Sigmoid colon (tissue), 7 donors: ENCODE measurements at regions of chr13 and their contacts with region 1.

Region 1: GRCh38 chr13:110108347-110109174 is 198.4 kb downstream of the COL4A1 start:
- DNase-seq: peak; percentile 93
- H3K4me3 ChIP-seq: no peak overlapping the region
- H3K27ac ChIP-seq: peak overlapping the region; percentile 77 to 86 (median 84)
- H3K4me1 ChIP-seq: peaks cover 3 to 49% (median 40%) of the 10 kb centered on the region in 4 donors
- H3K27me3 ChIP-seq: no peaks in the 10 kb centered on the region
- CTCF ChIP-seq: peak; percentile 64 to 84 (median 77)
- EP300 ChIP-seq: no peak
- POLR2A ChIP-seq: no peak

Region 2: GRCh38 chr13:108915634-108916512 is 1192.7 kb before region 1 on chr13:
- intact Hi-C with region 1: loop called (anchors 10 kb)
- DNase-seq: peak; percentile 98
- H3K4me3 ChIP-seq: peak overlapping the region in 3 of 4 donors; percentile 20 to 34 (median 25)
- H3K27ac ChIP-seq: peak overlapping the region; percentile 73 to 87 (median 80)
- H3K4me1 ChIP-seq: peaks cover 0 to 39% (median 25%) of the 10 kb centered on the region in 4 donors
- H3K27me3 ChIP-seq: no peaks in the 10 kb centered on the region
- CTCF ChIP-seq: no peak
- EP300 ChIP-seq: peak in 3 of 4 donors; percentile 77 to 98 (median 82)
- POLR2A ChIP-seq: no peak

Region 3: GRCh38 chr13:109145631-109146030 is 962.9 kb before region 1 on chr13:
- intact Hi-C with region 1: loop called (anchors 5 kb)
- DNase-seq: no peak
- H3K4me3 ChIP-seq: no peak overlapping the region
- H3K27ac ChIP-seq: peak overlapping the region in 2 of 4 donors; percentile 55 to 69
- H3K4me1 ChIP-seq: peaks cover 0 to 28% (median 24%) of the 10 kb centered on the region in 4 donors
- H3K27me3 ChIP-seq: peaks cover 2 to 8% (median 8%) of the 10 kb centered on the region in 3 donors
- CTCF ChIP-seq: peak; percentile 49 to 77 (median 67)
- EP300 ChIP-seq: no peak
- POLR2A ChIP-seq: no peak

Region 4: DNA sequence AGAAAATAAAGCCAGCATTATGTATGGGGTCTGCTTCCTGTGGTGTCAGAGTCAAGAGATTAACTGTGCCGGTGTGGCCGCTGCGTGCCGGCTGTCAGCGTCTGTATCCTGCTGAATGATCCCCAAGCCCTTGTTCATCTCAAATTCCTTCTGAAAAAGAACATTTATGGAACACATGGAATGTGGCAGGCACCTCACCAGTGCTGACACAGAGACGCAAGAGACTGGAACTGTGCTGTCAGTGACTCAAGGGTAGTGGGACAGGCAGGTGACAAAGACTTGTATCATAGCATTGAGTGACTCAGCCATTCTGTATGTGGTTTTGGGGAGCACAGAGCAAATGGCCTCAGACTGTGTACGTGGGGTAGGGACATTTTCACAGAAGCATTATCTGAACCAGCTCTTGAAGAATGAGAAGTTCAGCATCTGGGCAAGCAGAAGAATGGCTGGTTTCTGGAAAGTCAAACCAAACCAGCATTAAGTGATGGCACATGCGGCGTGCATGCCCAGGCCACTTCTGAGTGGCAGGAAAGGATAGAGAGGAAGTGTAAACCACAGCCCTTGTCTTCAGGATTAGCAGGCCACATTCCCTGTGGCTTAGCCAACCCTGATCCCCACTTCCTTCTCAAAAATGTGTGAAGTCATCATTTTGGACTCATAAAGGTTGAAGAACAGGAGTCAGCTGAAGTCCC is 268.2 kb before region 1 on chr13:
- intact Hi-C with region 1: loop called (anchors 5 kb)
- DNase-seq: no peak
- H3K4me3 ChIP-seq: no peak overlapping the region
- H3K27ac ChIP-seq: no peak overlapping the region
- H3K4me1 ChIP-seq: peaks cover 0 to 19% (median 10%) of the 10 kb centered on the region in 4 donors
- H3K27me3 ChIP-seq: no peaks in the 10 kb centered on the region
- CTCF ChIP-seq: no peak
- EP300 ChIP-seq: no peak
- POLR2A ChIP-seq: no peak

Region 5: DNA sequence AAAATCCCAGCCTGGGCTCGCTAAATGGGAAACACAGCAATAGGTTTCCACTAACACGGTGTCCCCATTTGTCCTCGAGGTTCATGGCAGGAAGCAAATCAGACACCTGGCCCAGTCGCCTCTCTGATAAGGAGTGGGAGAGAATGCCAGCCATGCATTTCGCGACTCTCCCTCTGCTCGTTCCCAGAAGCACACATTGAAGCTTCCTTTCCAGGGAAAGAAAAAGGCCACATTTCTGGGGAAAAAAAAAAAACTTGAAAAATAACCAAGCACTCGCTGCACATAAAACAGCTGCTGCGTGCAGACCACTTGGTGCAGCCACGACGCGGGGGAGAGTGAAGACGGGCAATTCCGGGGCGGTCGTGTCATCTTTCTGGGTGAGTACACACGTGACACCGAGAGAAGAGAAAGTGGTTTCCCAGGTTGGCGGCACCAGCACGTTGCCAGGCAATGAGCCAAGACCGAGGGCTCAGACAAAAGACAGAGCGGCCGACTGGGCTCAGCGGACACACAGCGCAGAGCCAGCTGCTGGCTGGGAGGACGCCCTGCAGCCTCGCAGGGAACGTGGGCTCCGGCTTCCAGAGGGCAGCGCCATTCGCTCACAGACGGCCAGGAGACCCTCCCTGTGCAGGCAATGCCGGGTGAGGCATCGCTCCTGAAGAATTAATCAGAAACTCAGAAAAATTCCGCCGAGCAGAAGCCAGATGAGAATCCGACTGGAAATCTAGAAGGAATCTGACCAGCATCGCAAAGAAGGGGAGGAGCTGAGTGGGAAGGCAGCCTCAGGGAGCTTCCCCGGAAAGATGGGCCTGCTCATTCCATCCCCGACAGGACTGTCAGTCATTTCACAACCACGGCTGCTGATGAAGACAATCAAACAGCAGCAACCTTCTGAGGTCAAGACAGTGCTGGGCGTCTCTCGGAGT is 239.0 kb before region 1 on chr13:
- intact Hi-C with region 1: loop called (anchors 2 kb)
- DNase-seq: peak; percentile 93
- H3K4me3 ChIP-seq: peak overlapping the region; percentile 24 to 45 (median 40)
- H3K27ac ChIP-seq: peak overlapping the region; percentile 67 to 73 (median 72)
- H3K4me1 ChIP-seq: peaks cover 0 to 32% (median 21%) of the 10 kb centered on the region in 4 donors
- H3K27me3 ChIP-seq: no peaks in the 10 kb centered on the region
- CTCF ChIP-seq: peak in 2 of 4 experiments; percentile 24 to 40
- EP300 ChIP-seq: peak in 1 of 4 donors; percentile 28
- POLR2A ChIP-seq: no peak

Region 6: DNA sequence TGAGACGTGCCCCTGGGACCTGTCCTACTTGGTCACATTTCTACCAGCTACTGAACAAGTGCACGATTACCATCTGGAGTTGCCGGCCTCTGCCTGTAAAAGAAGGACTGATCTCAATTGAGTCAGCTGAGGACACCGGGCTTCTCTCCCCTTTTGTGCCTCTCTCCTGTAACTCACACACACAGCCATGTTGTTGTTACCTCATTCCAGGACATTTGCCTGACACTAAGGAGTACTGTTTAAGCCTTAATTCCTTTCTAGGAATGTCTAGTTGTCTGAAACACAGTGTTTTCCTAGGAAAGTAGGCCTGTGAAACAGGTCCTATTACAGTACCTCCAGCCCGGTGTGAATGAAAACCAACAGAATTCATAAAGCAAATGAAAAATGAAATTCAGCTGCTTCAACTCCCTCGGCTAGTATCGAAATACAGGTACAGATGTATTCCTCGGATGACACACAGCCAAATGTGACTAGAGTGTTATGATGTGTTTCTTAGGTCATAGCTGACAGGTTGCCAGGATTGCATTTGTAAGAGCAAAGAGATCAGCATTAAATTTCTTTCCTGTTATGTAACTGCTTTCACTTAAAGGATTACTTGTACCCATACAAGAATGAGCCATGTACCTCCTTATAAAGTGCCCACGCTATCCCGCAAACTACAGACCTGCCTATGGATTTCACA is 170.2 kb before region 1 on chr13:
- intact Hi-C with region 1: loop called (anchors 5 kb)
- DNase-seq: no peak
- H3K4me3 ChIP-seq: no peak overlapping the region
- H3K27ac ChIP-seq: peak overlapping the region in 3 of 4 donors; percentile 35 to 38 (median 36)
- H3K4me1 ChIP-seq: peaks cover 0 to 11% (median 0%) of the 10 kb centered on the region in 4 donors
- H3K27me3 ChIP-seq: no peaks in the 10 kb centered on the region
- CTCF ChIP-seq: no peak
- EP300 ChIP-seq: no peak
- POLR2A ChIP-seq: no peak